ENCODE measurements at regions of chr9 and their contacts with region 1.

Region 1: GRCh38 chr9:134339183-134339806 is 13.0 kb downstream of the RXRA start:
- DNase-seq: no peak

Region 2: GRCh38 chr9:134067904-134068743 is 271.2 kb before region 1 on chr9 and contains the start of gene BRD3:
- intact Hi-C with region 1: loop called in 1 of 2 experiments (anchors 10 kb)
- DNase-seq: peak; percentile 95
- total RNA-seq, gene BRD3: 32.2 to 32.6 TPM